ENCODE measurements at regions of chr1 and their contacts with region 1.

Region 1: GRCh38 chr1:160330129-160330528 is 12.9 kb downstream of the COPA start:
- DNase-seq: no peak
- H3K4me3 ChIP-seq: no peak overlapping the region
- H3K27ac ChIP-seq: no peak overlapping the region
- H3K4me1 ChIP-seq: no peaks in the 10 kb centered on the region
- H3K27me3 ChIP-seq: no peaks in the 10 kb centered on the region
- CTCF ChIP-seq: no peak
- POLR2A ChIP-seq: no peak

Region 2: GRCh38 chr1:160291248-160292220 is 38.6 kb before region 1 on chr1:
- intact Hi-C with region 1: loop called in 1 of 2 experiments (anchors 5 kb)
- DNase-seq: peak; percentile 63 to 89 (median 77)
- H3K4me3 ChIP-seq: no peak overlapping the region
- H3K27ac ChIP-seq: peak overlapping the region in 2 of 5 donors; percentile 42 to 67
- H3K4me1 ChIP-seq: peaks cover 0 to 6% of the 10 kb centered on the region in 2 donors
- H3K27me3 ChIP-seq: no peaks in the 10 kb centered on the region
- CTCF ChIP-seq: peak; percentile 73 to 83 (median 80)
- POLR2A ChIP-seq: no peak

Measured in adrenal gland (tissue), 19 donors.